ENCODE measurements at regions of chr15 and their contacts with region 1.

Region 1: DNA sequence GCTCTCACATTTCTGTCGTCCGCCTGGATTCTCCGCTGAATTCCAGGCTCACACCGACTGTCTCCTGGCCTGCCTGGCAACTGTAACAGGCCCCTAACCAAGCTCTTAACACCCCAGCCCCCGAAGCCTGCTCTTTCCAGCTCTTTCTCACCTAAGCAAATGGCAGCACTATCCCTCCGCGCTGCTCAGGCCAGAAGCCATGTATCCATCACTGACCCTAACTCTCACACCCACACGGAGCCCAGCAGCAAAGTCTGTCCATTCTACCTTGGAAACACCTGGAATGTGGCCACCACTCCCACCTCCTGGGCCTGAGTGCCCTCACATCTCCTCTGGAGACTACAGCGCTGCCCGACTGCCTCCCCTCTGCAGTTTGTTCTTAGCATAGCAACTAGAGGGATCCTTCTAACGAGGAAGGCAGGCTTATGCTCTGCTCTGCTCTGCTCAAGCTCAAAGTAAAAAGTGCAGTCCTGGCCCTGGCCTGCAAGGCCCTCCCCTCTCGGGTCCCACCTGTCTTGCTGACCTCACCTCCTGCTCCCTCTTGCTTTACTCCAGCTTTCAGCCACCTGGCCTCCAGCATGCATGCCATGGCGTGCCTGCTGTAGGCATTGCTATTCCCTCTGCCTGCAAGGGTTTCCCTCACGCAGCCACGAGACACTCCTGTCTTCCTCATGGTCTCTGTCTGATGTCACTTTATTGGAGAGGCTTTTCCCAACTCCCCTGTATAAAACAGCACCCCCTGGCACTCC is 27.2 kb downstream of the FEM1B start:
- DNase-seq: no peak
- H3K4me3 ChIP-seq: no peak overlapping the region
- H3K27ac ChIP-seq: no peak overlapping the region
- H3K27me3 ChIP-seq: no peaks in the 10 kb centered on the region
- CTCF ChIP-seq: no peak

Region 2: DNA sequence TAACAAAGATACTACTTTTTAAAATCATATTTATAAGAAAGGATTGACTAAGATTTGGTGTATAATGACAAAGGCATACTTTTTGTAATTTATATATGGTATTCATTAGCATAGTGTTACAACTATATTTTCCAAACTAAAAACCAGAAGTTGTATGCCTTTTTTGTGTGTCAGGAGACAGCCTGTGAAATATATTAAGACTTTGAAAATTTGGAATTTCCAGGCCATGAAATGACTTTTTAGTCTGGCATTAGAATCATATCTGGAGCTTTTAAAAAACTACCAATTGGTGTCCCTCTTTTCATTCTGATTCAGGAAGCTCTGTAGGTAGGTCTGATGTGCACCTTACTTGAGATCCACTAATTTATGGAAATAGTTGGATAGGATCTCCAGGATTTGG is 141.6 kb before region 1 on chr15:
- CTCF ChIA-PET with region 1: no interaction called
- POLR2A ChIA-PET with region 1: no interaction called
- DNase-seq: no peak
- H3K4me3 ChIP-seq: no peak overlapping the region
- H3K27ac ChIP-seq: no peak overlapping the region
- H3K27me3 ChIP-seq: no peaks in the 10 kb centered on the region
- CTCF ChIP-seq: no peak

Region 3: DNA sequence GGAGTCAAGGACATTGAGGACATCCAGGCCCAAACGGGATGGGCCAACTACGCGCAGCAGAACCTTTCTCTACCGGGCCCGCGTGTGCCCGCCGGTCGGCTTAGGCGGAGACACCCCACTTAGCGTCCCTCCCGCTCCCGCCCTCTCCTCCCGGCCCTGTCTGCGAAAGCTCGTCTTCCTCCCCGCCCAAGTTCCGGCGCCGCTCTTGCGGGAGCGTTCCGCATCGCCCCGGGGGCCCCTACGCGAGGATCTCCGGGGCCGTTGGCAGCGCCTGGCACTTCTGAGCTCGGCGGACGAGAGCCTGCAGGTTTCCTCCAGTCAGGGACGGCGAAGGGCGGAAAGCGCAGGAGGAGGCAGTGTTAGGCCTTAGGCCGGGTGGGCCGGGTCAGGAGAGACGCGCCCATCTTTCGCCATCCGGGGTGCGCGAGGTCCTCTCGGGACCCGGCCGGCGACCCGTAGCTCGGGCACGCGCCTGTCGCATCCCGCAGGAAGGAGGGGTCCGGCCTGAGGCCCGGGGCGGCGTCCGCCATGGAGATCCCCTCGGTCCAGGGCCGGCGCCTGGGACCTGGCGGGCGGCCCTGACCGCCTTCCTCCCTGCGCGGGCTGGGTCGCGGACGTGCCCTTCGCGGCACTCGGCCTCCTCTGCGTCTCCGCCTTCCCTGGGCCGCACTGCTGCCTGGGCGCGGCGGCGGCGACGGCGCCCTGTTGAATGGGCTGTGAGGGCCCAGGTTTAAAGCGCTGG is 27.0 kb before region 1 on chr15 and contains the start of gene FEM1B:
- CTCF ChIA-PET with region 1: interaction called, 14 read pairs
- POLR2A ChIA-PET with region 1: no interaction called
- DNase-seq: peak; percentile 80
- H3K4me3 ChIP-seq: peak within 1 kb of the TSS; percentile 96
- H3K27ac ChIP-seq: peak within 1 kb of the TSS; percentile 94
- H3K27me3 ChIP-seq: no peaks in the 10 kb centered on the region
- CTCF ChIP-seq: no peak
- polyA plus RNA-seq, gene FEM1B: 46.5 and 55.1 TPM in 2 replicates

Region 4: GRCh38 chr15:68283401-68283800 is 21.4 kb before region 1 on chr15:
- CTCF ChIA-PET with region 1: interaction called, 14 read pairs
- POLR2A ChIA-PET with region 1: no interaction called
- DNase-seq: no peak
- H3K4me3 ChIP-seq: no peak overlapping the region
- H3K27ac ChIP-seq: no peak overlapping the region
- H3K27me3 ChIP-seq: no peaks in the 10 kb centered on the region
- CTCF ChIP-seq: no peak

Region 5: GRCh38 chr15:68292157-68292781 is 12.5 kb before region 1 on chr15:
- CTCF ChIA-PET with region 1: interaction called, 40 read pairs
- POLR2A ChIA-PET with region 1: no interaction called
- DNase-seq: no peak
- H3K4me3 ChIP-seq: no peak overlapping the region
- H3K27ac ChIP-seq: no peak overlapping the region
- H3K27me3 ChIP-seq: no peaks in the 10 kb centered on the region
- CTCF ChIP-seq: no peak

Region 6: GRCh38 chr15:68316061-68316804 is 11.5 kb after region 1 on chr15:
- CTCF ChIA-PET with region 1: interaction called, 13 read pairs
- POLR2A ChIA-PET with region 1: no interaction called
- DNase-seq: no peak
- H3K4me3 ChIP-seq: no peak overlapping the region
- H3K27ac ChIP-seq: no peak overlapping the region
- H3K27me3 ChIP-seq: no peaks in the 10 kb centered on the region
- CTCF ChIP-seq: peak; percentile 39

Region 7: GRCh38 chr15:68413363-68414205 is 108.8 kb after region 1 on chr15:
- CTCF ChIA-PET with region 1: interaction called, 16 read pairs
- POLR2A ChIA-PET with region 1: no interaction called
- DNase-seq: no peak
- H3K4me3 ChIP-seq: no peak overlapping the region
- H3K27ac ChIP-seq: no peak overlapping the region
- H3K27me3 ChIP-seq: no peaks in the 10 kb centered on the region
- CTCF ChIP-seq: no peak

Region 8: DNA sequence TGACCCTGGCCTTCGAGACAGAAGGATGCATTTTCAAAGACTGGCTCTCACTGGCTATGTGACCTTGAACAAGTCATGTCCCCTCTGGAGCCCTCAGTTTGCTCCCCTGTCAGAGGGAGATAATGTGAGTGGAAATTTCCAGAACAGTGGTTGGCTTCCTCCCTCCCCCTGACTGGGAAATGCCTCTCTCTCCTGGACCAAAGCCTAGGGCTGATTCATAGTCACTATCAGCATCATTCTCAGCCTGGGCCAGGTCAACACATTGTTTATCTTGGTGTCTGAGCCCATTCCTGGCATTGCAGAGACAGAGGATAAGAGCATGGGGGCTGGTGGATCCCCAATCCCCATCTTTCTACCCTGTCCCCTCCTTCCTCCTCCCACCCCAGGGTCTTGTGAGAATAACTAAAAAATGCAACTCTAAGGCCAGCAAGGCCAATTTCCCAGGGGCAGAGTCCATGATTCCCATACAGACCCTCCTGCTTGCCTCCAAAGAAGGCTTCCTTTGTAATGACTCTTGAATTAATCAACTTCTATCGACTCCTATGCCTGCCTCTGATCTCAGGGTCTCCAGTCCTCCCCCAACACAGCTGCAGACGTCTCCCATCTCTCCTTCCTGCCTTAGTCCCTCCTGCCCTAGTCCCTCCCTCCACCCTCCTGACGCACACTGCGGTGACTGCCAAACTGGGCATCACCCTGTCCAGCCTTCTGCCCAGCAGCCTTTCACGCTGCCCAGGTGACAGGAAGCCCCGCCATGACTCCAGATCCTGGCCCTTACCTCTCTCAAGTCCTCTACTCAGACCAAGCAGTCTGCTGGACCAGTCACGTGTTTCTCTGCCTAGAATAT is 238.6 kb after region 1 on chr15:
- CTCF ChIA-PET with region 1: interaction called, 99 read pairs
- POLR2A ChIA-PET with region 1: no interaction called
- DNase-seq: peak; percentile 80
- H3K4me3 ChIP-seq: no peak overlapping the region
- H3K27ac ChIP-seq: peak overlapping the region; percentile 80
- H3K27me3 ChIP-seq: no peaks in the 10 kb centered on the region
- CTCF ChIP-seq: no peak